Activated CD4-positive, alpha-beta memory T cell treated with anti-CD3 and anti-CD28 coated beads, Interleukin-2, amount 10 ng/mL, durations not matched to agents 7 days and 5 days (primary cell): ENCODE measurements at regions of chr12 and their contacts with region 1.

Region 1: GRCh38 chr12:104790296-104791125 is 167.6 kb downstream of the SLC41A2 start:
- DNase-seq: peak; percentile 33
- H3K4me3 Mint-ChIP-seq: no peak overlapping the region
- H3K27ac Mint-ChIP-seq: no peak overlapping the region
- H3K4me1 Mint-ChIP-seq: no peaks in the 10 kb centered on the region
- H3K27me3 Mint-ChIP-seq: no peaks in the 10 kb centered on the region

Region 2: DNA sequence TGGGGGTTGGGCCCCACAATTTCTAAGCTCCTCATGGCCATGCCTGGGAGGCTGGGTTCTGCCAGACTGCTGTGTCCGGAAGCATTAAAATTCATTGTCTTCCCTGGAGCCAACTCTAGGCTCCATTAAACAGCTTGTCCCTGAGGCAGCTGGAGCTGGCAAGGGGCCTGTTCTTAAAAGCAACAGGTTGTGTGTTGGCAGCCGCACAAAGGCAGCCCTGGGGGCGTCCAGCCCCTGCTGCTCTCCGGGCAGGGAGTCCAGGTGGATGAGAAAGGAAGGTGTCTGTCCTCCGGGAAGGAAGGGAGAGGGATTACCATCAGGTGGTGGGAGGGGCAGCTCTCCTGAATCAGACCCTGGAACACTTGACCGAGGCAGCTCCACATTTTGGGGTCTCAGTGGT is 234.9 kb before region 1 on chr12:
- CTCF ChIA-PET with region 1: no interaction called
- POLR2A ChIA-PET with region 1: no interaction called
- DNase-seq: no peak
- H3K4me3 Mint-ChIP-seq: no peak overlapping the region
- H3K27ac Mint-ChIP-seq: no peak overlapping the region
- H3K4me1 Mint-ChIP-seq: peaks cover 42% of the 10 kb centered on the region
- H3K27me3 Mint-ChIP-seq: no peaks in the 10 kb centered on the region

Region 3: DNA sequence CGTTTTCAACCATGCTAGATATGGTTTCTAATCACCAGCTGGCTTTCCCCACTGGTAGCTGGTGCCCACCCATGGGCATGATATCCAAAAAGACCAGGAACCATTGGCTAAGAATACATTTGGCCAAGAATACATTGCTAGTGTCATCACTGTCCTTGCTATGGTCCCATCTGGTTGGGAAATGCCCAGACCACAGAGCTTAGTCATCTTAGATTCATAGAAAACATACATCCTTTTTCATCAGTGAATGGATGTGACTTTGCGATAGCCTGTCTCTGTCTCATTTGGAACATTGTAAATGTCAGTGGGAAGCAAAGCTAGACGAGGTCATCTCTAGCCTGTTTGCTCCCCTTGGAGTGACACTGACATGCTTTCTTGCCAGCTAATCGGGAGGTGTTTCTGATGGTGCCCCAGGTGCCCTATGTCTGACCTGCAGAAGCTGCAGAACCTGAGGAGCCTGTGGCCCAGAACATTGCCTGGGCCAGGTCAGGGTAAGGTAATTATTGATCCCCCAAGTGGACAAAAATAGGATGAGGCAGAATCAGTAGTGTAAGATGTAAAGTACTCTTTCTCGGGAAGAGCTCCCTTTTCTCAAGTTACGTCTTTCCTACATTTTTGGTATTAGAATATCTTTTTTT is 27.2 kb before region 1 on chr12:
- CTCF ChIA-PET with region 1: interaction called, 12 read pairs
- POLR2A ChIA-PET with region 1: no interaction called
- DNase-seq: no peak
- H3K4me3 Mint-ChIP-seq: no peak overlapping the region
- H3K27ac Mint-ChIP-seq: peak overlapping the region; percentile 71
- H3K4me1 Mint-ChIP-seq: peaks cover 40% of the 10 kb centered on the region
- H3K27me3 Mint-ChIP-seq: no peaks in the 10 kb centered on the region